Gastrocnemius medialis (tissue), 4 donors: ENCODE measurements at regions of chr13 and their contacts with region 1.

Region 1: GRCh38 chr13:113383089-113383488 is 19.2 kb upstream of the GRTP1 start:
- DNase-seq: no peak
- ATAC-seq: no peak
- H3K4me3 ChIP-seq: no peak overlapping the region
- H3K27ac ChIP-seq: no peak overlapping the region
- H3K4me1 ChIP-seq: no peaks in the 10 kb centered on the region
- H3K27me3 ChIP-seq: no peaks in the 10 kb centered on the region
- CTCF ChIP-seq: no peak
- POLR2A ChIP-seq: no peak

Region 2: DNA sequence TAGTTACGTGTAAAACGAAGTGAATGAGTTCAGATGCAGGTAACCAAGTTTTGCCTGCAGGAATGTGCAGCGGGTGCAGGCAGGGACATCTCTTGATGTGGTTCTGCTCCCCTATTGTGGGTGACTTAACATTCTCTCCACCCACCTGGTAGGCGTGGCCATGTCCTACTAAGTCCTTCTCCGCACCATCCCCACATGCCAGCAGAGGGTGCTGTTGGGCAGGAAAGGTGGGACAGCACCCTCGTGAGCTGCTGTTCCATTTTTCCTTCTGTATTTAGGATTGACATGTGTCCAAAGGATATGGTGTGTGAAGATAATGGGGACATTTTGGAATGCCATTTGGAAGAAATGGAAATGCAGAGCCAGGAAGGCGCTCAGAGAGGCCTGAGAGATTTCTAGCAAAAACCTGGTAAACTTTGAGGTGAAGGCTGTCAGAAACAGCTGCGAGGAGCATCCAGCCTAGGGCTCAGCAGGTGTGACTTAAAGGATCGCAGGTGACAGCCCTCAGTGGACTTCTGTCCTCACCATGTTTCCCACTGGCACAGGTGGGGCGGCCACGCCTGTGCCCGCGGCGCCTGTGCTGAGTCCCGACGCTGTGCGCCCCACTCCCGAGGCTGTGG is 440.3 kb before region 1 on chr13:
- in situ Hi-C with region 1: loop called in 2 of 4 experiments (anchors 10 to 25 kb)
- intact Hi-C with region 1: no loop called
- DNase-seq: peak; percentile 82 to 89
- ATAC-seq: peak; percentile 95 to 97
- H3K4me3 ChIP-seq: peak overlapping the region; percentile 49 to 62 (median 52)
- H3K27ac ChIP-seq: peak overlapping the region in 2 of 4 donors; percentile 36 to 69
- H3K4me1 ChIP-seq: peaks cover 3 to 7% of the 10 kb centered on the region in 2 donors
- H3K27me3 ChIP-seq: peaks cover 0 to 16% (median 9%) of the 10 kb centered on the region in 3 donors
- CTCF ChIP-seq: peak; percentile 69 to 96 (median 82)
- POLR2A ChIP-seq: no peak

Region 3: GRCh38 chr13:113275387-113275786 is 107.7 kb before region 1 on chr13:
- in situ Hi-C with region 1: loop called in 3 of 4 experiments (anchors 10 to 25 kb)
- intact Hi-C with region 1: no loop called
- DNase-seq: peak in 1 of 2 donors; percentile 37
- ATAC-seq: peak; percentile 40 to 71
- H3K4me3 ChIP-seq: no peak overlapping the region
- H3K27ac ChIP-seq: no peak overlapping the region
- H3K4me1 ChIP-seq: peaks cover 0 to 7% of the 10 kb centered on the region in 2 donors
- H3K27me3 ChIP-seq: no peaks in the 10 kb centered on the region
- CTCF ChIP-seq: peak; percentile 50 to 65 (median 59)
- POLR2A ChIP-seq: no peak